Activated T-helper 1 cell treated with anti-CD3 and anti-CD28 coated beads, Interleukin-12 subunit alpha, Interleukin-12 subunit beta, Interleukin-2, Interleukin-4 antibody, amounts not matched to agents 30 ng/mL and 10 ng/mL and 1 ng/mL, durations not matched to agents 14 hours and 24 hours and 36 hours (primary cell): ENCODE measurements at regions of chr19 and their contacts with region 1.

Region 1: GRCh38 chr19:12666265-12667048 is at the starts of genes MAN2B1 and WDR83:
- DNase-seq: peak; percentile 77
- H3K4me3 Mint-ChIP-seq: peak within 1 kb of the TSS; percentile 95
- H3K27ac Mint-ChIP-seq: peak within 1 kb of the TSS; percentile 98
- H3K4me1 Mint-ChIP-seq: peaks cover 47% of the 10 kb centered on the region
- H3K27me3 Mint-ChIP-seq: no peaks in the 10 kb centered on the region
- total RNA-seq, gene MAN2B1: 132 and 143 TPM in 2 replicates
- total RNA-seq, gene WDR83: 25.6 and 27.1 TPM in 2 replicates

Region 2: DNA sequence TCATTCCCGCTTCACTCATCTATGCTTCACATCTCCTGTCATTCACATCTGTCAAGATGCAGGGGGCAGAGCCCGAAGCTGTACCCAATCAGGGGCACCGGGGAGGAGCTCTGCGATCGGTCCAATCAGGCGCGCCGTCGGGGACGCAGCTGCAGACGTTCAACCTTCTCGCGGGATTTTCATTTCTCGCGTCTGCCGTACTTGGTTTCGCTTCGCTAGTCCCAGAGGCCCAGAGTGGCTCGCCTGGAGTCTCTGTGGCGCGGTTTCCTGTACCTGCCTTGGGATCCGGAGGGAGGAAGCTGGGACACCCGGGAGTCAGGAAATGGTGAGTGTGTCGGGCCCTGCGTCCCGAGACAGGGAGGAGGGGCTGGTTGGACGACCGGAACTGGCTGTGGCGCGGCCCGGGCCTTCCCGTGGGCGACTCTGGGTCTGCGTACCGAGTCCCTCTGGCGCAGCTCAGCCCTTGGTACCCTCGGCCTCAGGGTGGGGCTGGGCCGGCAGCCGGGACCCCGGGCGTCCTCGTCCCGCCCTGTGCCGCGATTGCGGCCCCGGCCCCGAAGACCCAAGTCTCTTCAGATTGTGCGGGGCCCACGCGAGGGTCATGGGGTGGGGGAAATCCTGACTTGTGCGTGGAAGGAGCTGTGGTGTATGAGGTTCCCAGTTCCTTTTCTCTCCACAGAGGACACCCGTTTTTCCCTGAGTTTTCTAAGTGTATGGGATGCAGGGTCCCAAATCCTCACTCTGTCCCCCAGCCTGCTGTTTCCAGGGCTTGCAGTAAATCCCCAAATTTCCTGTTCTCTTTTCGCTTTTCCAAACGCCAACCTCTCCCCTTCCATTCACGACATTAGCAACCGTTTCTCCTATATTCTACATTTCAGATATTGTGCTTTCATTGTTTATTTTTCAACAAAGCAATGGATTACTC is 503.3 kb before region 1 on chr19 and contains the start of gene ZNF136:
- intact Hi-C with region 1: loop called (anchors 5 kb)
- DNase-seq: peak; percentile 90
- H3K4me3 Mint-ChIP-seq: peak within 1 kb of the TSS; percentile 94
- H3K27ac Mint-ChIP-seq: peak within 1 kb of the TSS; percentile 93
- H3K4me1 Mint-ChIP-seq: peaks cover 28% of the 10 kb centered on the region
- H3K27me3 Mint-ChIP-seq: no peaks in the 10 kb centered on the region
- total RNA-seq, gene ZNF136: 10.1 and 10.8 TPM in 2 replicates

Region 3: GRCh38 chr19:12440541-12441316 is 225.7 kb before region 1 on chr19 and contains the start of gene ZNF443:
- intact Hi-C with region 1: loop called (anchors 5 kb)
- DNase-seq: peak; percentile 98
- H3K4me3 Mint-ChIP-seq: peak within 1 kb of the TSS; percentile 100
- H3K27ac Mint-ChIP-seq: peak within 1 kb of the TSS; percentile 95
- H3K4me1 Mint-ChIP-seq: no peaks in the 10 kb centered on the region
- H3K27me3 Mint-ChIP-seq: no peaks in the 10 kb centered on the region
- total RNA-seq, gene ZNF443: 3.8 TPM in 2 replicates

Region 4: DNA sequence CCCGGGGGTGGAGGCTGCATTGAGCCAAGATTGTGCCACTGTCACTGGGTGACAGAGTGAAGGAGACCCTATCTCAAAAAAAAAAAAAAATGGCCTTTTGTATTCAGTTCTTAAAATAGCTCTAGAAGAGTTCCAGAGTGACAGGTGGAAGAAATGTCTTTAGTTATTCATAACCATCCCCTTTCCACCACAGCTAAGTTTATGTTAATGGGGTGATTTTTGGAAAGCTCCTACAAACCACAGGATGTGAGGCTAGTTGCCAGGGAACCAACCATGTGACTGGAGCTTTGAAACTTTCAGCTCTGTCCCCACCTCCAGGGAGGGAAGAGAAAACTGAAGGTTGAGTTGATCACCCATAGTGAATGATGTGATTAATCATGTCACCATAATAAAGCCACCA is 62.7 kb before region 1 on chr19:
- intact Hi-C with region 1: loop called (anchors 1 kb)
- DNase-seq: peak; percentile 64
- H3K4me3 Mint-ChIP-seq: no peak overlapping the region
- H3K27ac Mint-ChIP-seq: peak overlapping the region; percentile 67
- H3K4me1 Mint-ChIP-seq: peaks cover 11% of the 10 kb centered on the region
- H3K27me3 Mint-ChIP-seq: no peaks in the 10 kb centered on the region

Region 5: DNA sequence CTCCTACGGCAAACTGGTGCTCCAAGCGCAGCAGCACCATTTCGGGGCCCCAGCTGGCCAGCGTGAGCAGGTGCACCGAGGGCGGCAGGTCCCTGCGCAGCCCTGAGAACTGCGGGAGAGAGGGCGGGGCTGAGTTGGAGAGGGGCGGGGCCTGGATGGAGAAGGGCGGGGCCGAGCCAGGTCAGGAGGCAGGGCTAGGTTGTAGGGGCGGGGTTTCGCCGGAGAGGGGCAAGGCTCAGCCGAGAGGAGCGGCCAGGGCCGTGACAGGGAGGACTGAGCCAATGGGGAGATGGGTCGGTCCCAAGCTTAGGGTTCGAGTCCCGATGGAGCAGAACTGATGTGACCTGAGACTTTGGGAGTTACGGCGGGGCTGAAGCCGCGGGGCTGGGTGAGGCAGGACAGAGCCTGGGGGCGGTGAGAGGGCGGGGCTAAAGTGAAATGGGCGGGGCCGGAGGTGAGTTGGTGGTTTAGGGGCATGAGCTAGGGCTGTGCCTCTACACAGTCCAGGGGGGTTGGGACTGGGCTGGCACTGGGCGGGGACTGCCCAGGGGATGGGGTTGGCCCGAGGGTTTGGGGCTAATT is 18.9 kb before region 1 on chr19:
- intact Hi-C with region 1: loop called (anchors 1 kb)
- DNase-seq: no peak
- H3K4me3 Mint-ChIP-seq: no peak overlapping the region
- H3K27ac Mint-ChIP-seq: no peak overlapping the region
- H3K4me1 Mint-ChIP-seq: no peaks in the 10 kb centered on the region
- H3K27me3 Mint-ChIP-seq: no peaks in the 10 kb centered on the region

Region 6: DNA sequence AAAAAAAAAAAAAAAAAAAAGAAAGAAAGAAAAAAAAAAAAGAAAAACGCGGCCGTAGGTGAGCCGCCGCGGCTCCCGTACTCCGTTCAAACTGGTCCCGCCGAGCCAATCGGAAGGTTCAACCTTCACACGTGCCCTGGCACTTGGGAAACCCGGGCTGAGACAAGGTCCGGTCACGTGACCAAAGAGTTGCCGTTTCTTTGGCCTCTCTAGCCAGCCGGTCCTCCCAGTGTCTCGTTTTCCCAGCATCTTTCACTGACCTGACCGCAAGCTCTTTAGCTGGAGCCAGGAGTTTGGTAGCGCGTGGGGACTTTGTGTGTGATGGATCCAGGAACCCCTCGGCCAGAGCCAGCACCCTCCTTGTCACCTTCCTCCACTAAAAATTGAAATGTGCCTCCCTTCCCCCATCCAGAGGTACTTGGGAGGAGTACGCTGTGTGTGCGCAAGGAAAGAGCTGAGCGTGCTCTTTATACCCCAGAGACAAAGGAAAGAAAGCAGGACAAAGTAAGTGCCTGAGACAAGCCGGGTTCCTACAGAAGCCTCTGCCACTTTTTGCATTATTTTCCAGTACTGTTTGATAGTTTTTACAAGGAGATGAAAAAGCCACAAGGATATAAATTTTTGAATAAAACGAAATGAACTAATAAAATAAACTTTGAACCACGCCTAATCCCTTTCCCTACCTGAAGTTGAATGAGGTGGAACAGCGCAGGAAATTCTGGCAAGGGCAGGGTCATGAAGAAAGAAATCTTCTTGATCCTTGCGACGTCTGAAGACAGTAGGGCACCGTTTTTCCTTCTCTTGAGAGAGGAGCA is 56.3 kb after region 1 on chr19:
- intact Hi-C with region 1: loop called (anchors 1 kb)
- DNase-seq: peak; percentile 91
- H3K4me3 Mint-ChIP-seq: peak overlapping the region; percentile 99
- H3K27ac Mint-ChIP-seq: peak overlapping the region; percentile 98
- H3K4me1 Mint-ChIP-seq: peaks cover 48% of the 10 kb centered on the region
- H3K27me3 Mint-ChIP-seq: no peaks in the 10 kb centered on the region